ENCODE measurements at regions of chr1 and their contacts with region 1.

Region 1: DNA sequence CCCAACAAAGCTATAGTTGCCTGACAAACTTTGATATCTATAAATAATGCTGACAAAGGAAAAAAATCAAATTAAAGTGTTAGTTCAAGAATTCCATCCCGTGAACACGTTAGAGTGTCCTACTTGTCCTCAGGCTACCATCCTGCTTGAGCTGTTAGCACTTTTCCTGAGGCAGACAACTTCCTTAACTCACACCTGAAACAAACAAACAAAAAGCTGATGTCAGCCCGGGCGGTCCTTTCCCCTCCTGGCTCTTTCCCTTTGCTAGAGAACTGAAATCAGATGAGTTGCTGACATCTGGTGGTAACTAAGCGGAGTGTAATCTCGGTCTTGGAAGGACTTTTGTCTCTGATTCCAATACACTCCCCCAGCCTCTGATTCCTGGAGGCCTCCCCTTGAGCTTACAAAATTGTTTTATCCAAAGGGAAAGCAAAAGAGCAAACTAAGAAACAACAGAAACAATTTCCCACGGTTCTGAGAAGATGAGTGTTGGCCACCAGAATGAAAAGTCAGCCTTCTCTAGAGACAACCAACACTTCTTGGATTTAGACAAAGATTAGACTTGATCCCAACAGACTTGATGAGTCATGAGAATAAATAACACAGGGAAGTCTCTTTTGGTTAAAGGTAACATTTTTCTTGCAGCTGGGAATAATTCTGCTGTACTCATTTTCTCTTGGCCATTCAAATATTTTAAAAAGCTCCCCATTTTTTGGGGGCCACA is 135.4 kb downstream of the PROX1 start:
- DNase-seq: peak; percentile 41 to 90
- H3K4me3 ChIP-seq: peak overlapping the region; percentile 16; the same call in 1 of the 2 replicates
- H3K27ac ChIP-seq: peak overlapping the region; percentile 47
- H3K4me1 ChIP-seq: peaks cover 20% of the 10 kb centered on the region
- H3K27me3 ChIP-seq: no peaks in the 10 kb centered on the region
- CTCF ChIP-seq: peak; percentile 86

Region 2: GRCh38 chr1:212271823-212272485 is 1851.3 kb before region 1 on chr1:
- CTCF ChIA-PET with region 1: no interaction called
- POLR2A ChIA-PET with region 1: no interaction called
- intact Hi-C with region 1: no loop called
- DNase-seq: no peak
- H3K4me3 ChIP-seq: no peak overlapping the region
- H3K27ac ChIP-seq: no peak overlapping the region
- H3K4me1 ChIP-seq: no peaks in the 10 kb centered on the region
- H3K27me3 ChIP-seq: no peaks in the 10 kb centered on the region
- CTCF ChIP-seq: no peak

Region 3: DNA sequence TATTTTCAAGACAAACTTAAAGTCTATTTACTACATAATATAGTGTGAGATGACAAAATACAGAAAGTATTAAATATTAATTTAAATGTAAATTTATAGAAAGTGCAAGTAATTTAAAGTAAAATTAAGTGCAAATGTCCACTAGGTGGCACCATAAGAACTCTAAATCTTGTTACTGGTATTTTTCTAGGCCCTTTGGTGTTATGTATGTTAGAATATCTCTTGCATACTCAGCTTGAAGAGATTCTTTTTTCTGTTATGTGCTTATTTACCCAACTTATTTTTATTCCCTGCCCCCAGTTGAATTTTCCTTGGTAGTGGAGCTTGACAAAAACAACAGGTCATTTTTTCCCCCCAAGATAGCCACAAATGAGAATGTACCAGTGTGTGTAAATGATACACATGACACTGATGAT is 1000.7 kb before region 1 on chr1:
- CTCF ChIA-PET with region 1: no interaction called
- POLR2A ChIA-PET with region 1: no interaction called
- intact Hi-C with region 1: loop called (anchors 5 kb)
- DNase-seq: no peak
- H3K4me3 ChIP-seq: no peak overlapping the region
- H3K27ac ChIP-seq: no peak overlapping the region
- H3K4me1 ChIP-seq: peaks cover 17% of the 10 kb centered on the region
- H3K27me3 ChIP-seq: no peaks in the 10 kb centered on the region
- CTCF ChIP-seq: peak; percentile 71

Region 4: DNA sequence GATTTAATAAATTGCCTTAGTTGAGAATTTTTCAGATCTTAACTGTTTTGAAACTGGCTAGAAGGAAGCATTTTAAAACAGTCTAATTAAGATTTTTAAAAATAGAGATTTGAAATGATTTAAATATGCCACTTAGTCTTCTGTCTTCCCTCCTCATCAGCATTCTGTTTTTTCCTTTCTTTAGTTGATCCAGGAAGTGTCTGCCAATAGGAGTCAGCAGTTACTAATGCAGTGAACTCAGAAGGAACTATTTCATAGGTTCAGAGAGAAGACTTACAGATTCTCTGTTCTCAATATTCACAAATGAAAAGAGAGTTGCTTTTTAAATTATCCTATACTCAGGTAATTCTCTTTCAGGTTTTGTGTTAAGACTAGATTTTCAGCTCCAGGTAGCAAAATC is 987.7 kb before region 1 on chr1:
- CTCF ChIA-PET with region 1: interaction called, 11 read pairs
- POLR2A ChIA-PET with region 1: no interaction called
- intact Hi-C with region 1: no loop called
- DNase-seq: no peak
- H3K4me3 ChIP-seq: no peak overlapping the region
- H3K27ac ChIP-seq: no peak overlapping the region
- H3K4me1 ChIP-seq: no peaks in the 10 kb centered on the region
- H3K27me3 ChIP-seq: no peaks in the 10 kb centered on the region
- CTCF ChIP-seq: no peak

Region 5: DNA sequence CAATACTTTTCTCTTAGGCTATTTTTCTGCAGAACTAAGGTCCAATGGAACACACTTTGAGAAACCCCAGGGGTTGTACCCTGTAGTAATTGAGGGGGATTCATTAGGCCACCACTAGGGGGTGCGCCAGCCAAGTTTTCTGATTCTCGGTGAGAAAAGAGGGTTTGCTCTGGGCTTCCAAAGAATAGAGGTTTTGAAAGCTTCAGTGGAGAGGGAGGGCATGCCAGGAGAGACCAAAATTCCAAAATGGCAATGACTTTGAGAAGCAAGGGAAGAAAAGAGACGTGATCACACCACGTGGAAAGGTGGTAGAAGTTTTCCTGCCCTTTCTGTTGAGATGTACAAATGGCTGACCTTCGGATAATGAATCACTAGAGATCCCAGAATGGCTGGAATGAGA is 748.9 kb before region 1 on chr1:
- CTCF ChIA-PET with region 1: no interaction called
- POLR2A ChIA-PET with region 1: no interaction called
- intact Hi-C with region 1: loop called (anchors 1 kb)
- DNase-seq: peak in 1 of 2 experiments; percentile 37
- H3K4me3 ChIP-seq: no peak overlapping the region
- H3K27ac ChIP-seq: no peak overlapping the region
- H3K4me1 ChIP-seq: no peaks in the 10 kb centered on the region
- H3K27me3 ChIP-seq: no peaks in the 10 kb centered on the region
- CTCF ChIP-seq: peak; percentile 97

Region 6: GRCh38 chr1:214146523-214146922 is 23.3 kb after region 1 on chr1:
- CTCF ChIA-PET with region 1: no interaction called
- POLR2A ChIA-PET with region 1: no interaction called
- intact Hi-C with region 1: no loop called
- DNase-seq: no peak
- H3K4me3 ChIP-seq: no peak overlapping the region
- H3K27ac ChIP-seq: no peak overlapping the region
- H3K4me1 ChIP-seq: no peaks in the 10 kb centered on the region
- H3K27me3 ChIP-seq: no peaks in the 10 kb centered on the region
- CTCF ChIP-seq: no peak